HCT116 (cell line): ENCODE measurements at regions of chr15 and their contacts with region 1.

Region 1: DNA sequence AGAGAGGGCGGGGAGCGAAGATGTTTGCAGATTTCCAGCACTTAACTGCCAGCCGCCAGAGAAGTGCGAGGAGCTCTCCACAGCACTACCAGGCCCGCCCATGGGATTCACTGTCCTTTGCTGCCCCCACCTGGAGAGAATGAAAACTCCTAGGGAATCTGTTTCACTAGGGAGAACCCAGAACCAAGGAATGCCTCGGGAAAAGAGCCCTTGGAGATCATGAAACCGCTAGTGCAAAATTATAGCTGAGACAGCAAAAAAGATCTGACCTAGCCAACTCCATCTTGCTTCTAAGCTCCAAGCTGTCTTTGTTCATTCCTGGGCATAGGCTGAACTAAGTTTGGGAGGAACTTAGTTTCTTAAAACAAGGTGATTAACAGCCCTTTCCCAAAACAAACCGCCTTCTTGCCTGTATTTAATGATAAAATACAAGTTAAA is 82.6 kb upstream of the GCNT3 start:
- DNase-seq: peak; percentile 92
- ATAC-seq: peak; percentile 98
- H3K4me3 ChIP-seq: no peak overlapping the region
- H3K27ac ChIP-seq: no peak overlapping the region
- H3K4me1 ChIP-seq: peaks cover 8 to 9% of the 10 kb centered on the region in 2 experiments; a peak in 2 of 4 replicates
- H3K27me3 ChIP-seq: no peaks in the 10 kb centered on the region
- CTCF ChIP-seq: peak; percentile 77 to 90 (median 84)
- POLR2A ChIP-seq: no peak
- RAD21 ChIP-seq: peak; percentile 97

Region 2: DNA sequence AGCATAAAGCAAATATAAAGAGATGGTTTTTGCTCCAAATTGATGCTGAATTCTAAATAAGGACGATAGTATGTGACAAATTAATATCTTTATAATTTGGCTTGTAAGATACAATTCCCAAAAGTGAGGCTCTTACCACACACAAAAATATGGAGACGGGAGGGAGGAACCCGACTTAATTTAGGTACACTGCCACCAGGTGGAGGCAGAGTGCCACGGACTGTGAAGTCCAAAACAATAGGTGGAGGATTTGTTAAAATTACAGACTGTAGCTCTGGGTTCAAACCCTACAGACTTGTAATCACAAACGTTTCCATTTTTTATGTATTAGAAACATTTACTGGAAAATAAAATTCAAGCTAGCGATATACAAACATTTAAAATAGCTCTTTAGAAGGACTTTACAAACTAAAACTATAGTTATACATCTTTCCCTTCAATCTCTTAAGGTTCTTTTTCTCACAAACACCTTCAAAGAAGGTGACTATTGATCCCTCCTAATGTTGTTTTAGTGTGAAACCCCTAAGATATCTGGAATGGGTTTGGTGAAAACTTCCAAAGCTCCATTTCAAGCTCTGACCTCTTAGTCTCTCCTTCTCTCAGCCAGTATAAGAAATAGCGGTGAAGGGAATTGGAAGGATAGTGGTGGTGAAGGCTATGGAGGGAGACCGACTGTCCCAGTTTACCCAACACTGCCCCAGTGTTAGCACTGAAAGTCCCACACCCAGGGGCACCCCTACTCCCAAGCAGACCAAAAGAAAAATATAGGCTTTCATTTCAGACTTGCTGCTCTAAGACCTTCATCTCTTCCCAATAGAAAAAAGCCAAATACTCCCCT is 1301.1 kb before region 1 on chr15:
- CTCF ChIA-PET with region 1: interaction called, 14 read pairs
- POLR2A ChIA-PET with region 1: no interaction called
- RAD21 ChIA-PET with region 1: interaction called in 1 of 2 experiments, 3 read pairs
- intact Hi-C with region 1: loop called (anchors 1 kb)
- DNase-seq: peak; percentile 78
- ATAC-seq: peak; percentile 96
- H3K4me3 ChIP-seq: no peak overlapping the region
- H3K27ac ChIP-seq: no peak overlapping the region
- H3K4me1 ChIP-seq: peaks cover 2 to 7% of the 10 kb centered on the region in 2 experiments; a peak in 1 of 4 replicates
- H3K27me3 ChIP-seq: no peaks in the 10 kb centered on the region
- CTCF ChIP-seq: peak; percentile 76 to 93 (median 87)
- POLR2A ChIP-seq: no peak
- RAD21 ChIP-seq: peak; percentile 96

Region 3: GRCh38 chr15:59501597-59501996 is 27.4 kb before region 1 on chr15:
- CTCF ChIA-PET with region 1: interaction called, 33 read pairs
- POLR2A ChIA-PET with region 1: no interaction called
- RAD21 ChIA-PET with region 1: interaction called, 3 to 4 read pairs
- intact Hi-C with region 1: no loop called
- DNase-seq: peak; percentile 69
- ATAC-seq: peak; percentile 98
- H3K4me3 ChIP-seq: no peak overlapping the region
- H3K27ac ChIP-seq: no peak overlapping the region
- H3K4me1 ChIP-seq: no peaks in the 10 kb centered on the region
- H3K27me3 ChIP-seq: no peaks in the 10 kb centered on the region
- CTCF ChIP-seq: peak; percentile 73 to 89 (median 80); a peak in 5 of 6 replicates
- POLR2A ChIP-seq: no peak
- RAD21 ChIP-seq: peak; percentile 88

Region 4: GRCh38 chr15:59611276-59612260 is 82.6 kb after region 1 on chr15 and contains the start of gene GCNT3:
- CTCF ChIA-PET with region 1: interaction called, 23 read pairs
- POLR2A ChIA-PET with region 1: interaction called, 5 read pairs
- RAD21 ChIA-PET with region 1: interaction called, 4 to 6 read pairs
- intact Hi-C with region 1: no loop called
- DNase-seq: peak; percentile 32
- ATAC-seq: peak; percentile 72
- H3K4me3 ChIP-seq: peak within 1 kb of the TSS in 1 of 2 experiments; percentile 36; a peak in 2 of 4 replicates
- H3K27ac ChIP-seq: peak within 1 kb of the TSS; percentile 23
- H3K4me1 ChIP-seq: peaks cover 13 to 25% of the 10 kb centered on the region in 2 experiments; a peak in 3 of 4 replicates
- H3K27me3 ChIP-seq: no peaks in the 10 kb centered on the region
- CTCF ChIP-seq: no peak
- POLR2A ChIP-seq: no peak
- RAD21 ChIP-seq: no peak
- total RNA-seq, gene GCNT3: 5.6 TPM

Region 5: GRCh38 chr15:59632714-59633113 is 103.7 kb after region 1 on chr15:
- CTCF ChIA-PET with region 1: interaction called, 46 read pairs
- POLR2A ChIA-PET with region 1: interaction called, 3 read pairs
- RAD21 ChIA-PET with region 1: interaction called, 3 to 4 read pairs
- intact Hi-C with region 1: no loop called
- DNase-seq: no peak
- ATAC-seq: peak; percentile 94
- H3K4me3 ChIP-seq: no peak overlapping the region
- H3K27ac ChIP-seq: no peak overlapping the region
- H3K4me1 ChIP-seq: no peaks in the 10 kb centered on the region
- H3K27me3 ChIP-seq: no peaks in the 10 kb centered on the region
- CTCF ChIP-seq: peak; percentile 44 to 66 (median 55); a peak in 5 of 6 replicates
- POLR2A ChIP-seq: no peak
- RAD21 ChIP-seq: peak; percentile 56

Region 6: DNA sequence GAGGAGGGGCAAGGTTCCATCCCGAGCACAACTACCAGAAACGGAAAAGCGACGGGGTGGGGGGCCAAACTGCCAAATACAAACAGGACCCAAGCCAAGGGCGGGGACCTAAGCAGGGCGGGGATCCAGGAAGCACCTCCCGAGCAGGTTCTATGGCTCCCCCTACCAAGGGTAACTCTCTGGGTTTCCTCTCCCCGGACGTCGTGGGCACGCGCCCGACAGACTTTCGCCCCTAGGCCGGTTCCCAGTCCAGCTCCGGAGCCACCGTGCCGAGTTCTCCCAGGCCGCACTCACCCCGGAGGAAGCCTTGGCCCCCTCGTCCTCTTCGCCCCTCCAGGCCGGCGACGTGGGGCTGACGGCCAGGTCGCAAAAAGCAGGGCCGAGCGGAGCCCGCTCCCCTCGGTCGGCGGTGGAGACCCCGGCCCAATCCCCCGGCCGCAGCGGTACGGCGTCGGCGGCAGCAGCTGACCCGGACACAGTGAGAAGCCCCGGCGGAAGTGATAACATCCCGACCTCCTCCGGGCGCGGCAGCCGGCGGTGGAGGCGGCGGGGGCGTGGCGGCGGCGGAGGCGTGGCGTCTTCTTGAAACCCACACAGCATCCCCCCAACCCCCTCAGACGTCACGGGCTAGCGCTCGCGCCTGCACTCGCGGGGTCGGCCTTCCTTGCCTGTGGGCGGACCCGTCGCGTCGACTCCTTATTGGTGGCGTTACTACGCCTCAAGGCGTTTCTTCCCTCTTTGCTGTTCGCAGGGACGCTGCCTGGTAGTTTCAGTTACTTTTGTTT is 160.0 kb after region 1 on chr15 and contains the start of gene BNIP2:
- CTCF ChIA-PET with region 1: interaction called, 14 read pairs
- POLR2A ChIA-PET with region 1: no interaction called
- RAD21 ChIA-PET with region 1: no interaction called
- intact Hi-C with region 1: no loop called
- DNase-seq: peak; percentile 94
- ATAC-seq: peak; percentile 96
- H3K4me3 ChIP-seq: peak within 1 kb of the TSS; percentile 85 to 92
- H3K27ac ChIP-seq: peak within 1 kb of the TSS; percentile 95
- H3K4me1 ChIP-seq: peaks cover 15% of the 10 kb centered on the region in 2 experiments
- H3K27me3 ChIP-seq: no peaks in the 10 kb centered on the region
- CTCF ChIP-seq: no peak
- POLR2A ChIP-seq: no peak
- RAD21 ChIP-seq: no peak
- total RNA-seq, gene BNIP2: 53.1 TPM

Region 7: GRCh38 chr15:60017538-60018520 is 488.8 kb after region 1 on chr15:
- CTCF ChIA-PET with region 1: no interaction called
- POLR2A ChIA-PET with region 1: no interaction called
- RAD21 ChIA-PET with region 1: no interaction called
- intact Hi-C with region 1: no loop called
- DNase-seq: no peak
- ATAC-seq: no peak
- H3K4me3 ChIP-seq: no peak overlapping the region
- H3K27ac ChIP-seq: no peak overlapping the region
- H3K4me1 ChIP-seq: no peaks in the 10 kb centered on the region
- H3K27me3 ChIP-seq: peaks cover 26% of the 10 kb centered on the region
- CTCF ChIP-seq: no peak
- POLR2A ChIP-seq: no peak
- RAD21 ChIP-seq: no peak